Mammary epithelial cell (primary cell): ENCODE measurements at regions of chr3 and their contacts with region 1.

Region 1: DNA sequence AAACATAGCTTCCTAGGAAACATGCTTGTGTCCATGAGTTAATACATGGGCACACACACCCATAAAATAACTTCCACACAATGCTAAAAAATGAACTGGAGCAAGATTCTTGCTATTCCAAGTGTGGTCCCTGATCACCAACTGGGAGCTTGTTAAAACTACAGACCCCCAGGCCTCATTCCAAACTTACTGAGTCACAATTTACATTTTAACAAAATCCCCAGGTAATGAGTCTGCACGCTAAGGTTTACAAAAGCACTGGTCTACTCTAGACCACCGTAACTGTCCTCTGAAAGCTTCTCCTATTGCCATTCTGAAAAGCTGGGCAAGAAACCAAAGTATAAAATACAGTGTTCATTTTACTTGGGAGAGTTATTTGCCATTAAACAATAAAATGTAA is 45.4 kb downstream of the IGF2BP2 start:
- DNase-seq: no peak
- H3K4me3 ChIP-seq: no peak overlapping the region
- H3K27ac ChIP-seq: no peak overlapping the region
- H3K4me1 ChIP-seq: peaks cover 33% of the 10 kb centered on the region
- H3K27me3 ChIP-seq: no peaks in the 10 kb centered on the region
- CTCF ChIP-seq: no peak

Region 2: GRCh38 chr3:185582866-185583265 is 196.6 kb before region 1 on chr3:
- CTCF ChIA-PET with region 1: no interaction called
- dilution Hi-C with region 1: no loop called
- in situ Hi-C with region 1: no loop called
- intact Hi-C with region 1: no loop called
- DNase-seq: no peak
- H3K4me3 ChIP-seq: no peak overlapping the region
- H3K27ac ChIP-seq: no peak overlapping the region
- H3K4me1 ChIP-seq: peaks cover 11% of the 10 kb centered on the region
- H3K27me3 ChIP-seq: no peaks in the 10 kb centered on the region
- CTCF ChIP-seq: no peak

Region 3: DNA sequence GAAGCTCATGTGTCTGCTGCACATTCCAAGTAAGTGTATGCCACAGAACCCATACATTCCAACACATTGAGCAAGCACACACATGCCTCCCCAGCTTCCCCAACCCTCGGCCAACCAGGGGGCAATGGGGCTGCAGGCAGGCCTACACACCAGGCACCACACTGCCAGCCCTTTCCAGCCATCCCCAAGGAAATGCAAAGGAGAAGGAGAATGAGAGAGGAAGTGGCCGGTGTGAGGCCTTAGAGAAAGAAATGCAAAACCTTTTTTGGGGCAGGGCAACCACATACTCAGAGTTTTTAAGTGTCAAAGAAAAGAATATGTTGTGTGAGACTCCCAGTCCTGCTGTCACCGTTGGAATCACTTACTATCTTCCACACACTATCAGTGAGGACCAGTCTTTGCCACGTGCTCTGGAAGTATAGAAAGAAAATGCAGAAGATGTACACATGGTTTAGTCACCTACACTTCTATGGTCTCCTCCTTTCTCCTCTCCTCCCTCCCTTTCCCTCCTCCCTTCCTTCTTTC is 34.3 kb after region 1 on chr3:
- CTCF ChIA-PET with region 1: no interaction called
- dilution Hi-C with region 1: loop called (anchors 5 kb)
- in situ Hi-C with region 1: no loop called
- intact Hi-C with region 1: no loop called
- DNase-seq: peak; percentile 58
- H3K4me3 ChIP-seq: no peak overlapping the region
- H3K27ac ChIP-seq: peak overlapping the region; percentile 47
- H3K4me1 ChIP-seq: peaks cover 38% of the 10 kb centered on the region
- H3K27me3 ChIP-seq: no peaks in the 10 kb centered on the region
- CTCF ChIP-seq: no peak

Region 4: GRCh38 chr3:185858502-185859225 is 79.2 kb after region 1 on chr3:
- CTCF ChIA-PET with region 1: no interaction called
- dilution Hi-C with region 1: loop called (anchors 5 kb)
- in situ Hi-C with region 1: no loop called
- intact Hi-C with region 1: no loop called
- DNase-seq: no peak
- H3K4me3 ChIP-seq: no peak overlapping the region
- H3K27ac ChIP-seq: no peak overlapping the region
- H3K4me1 ChIP-seq: no peaks in the 10 kb centered on the region
- H3K27me3 ChIP-seq: no peaks in the 10 kb centered on the region
- CTCF ChIP-seq: no peak

Region 5: DNA sequence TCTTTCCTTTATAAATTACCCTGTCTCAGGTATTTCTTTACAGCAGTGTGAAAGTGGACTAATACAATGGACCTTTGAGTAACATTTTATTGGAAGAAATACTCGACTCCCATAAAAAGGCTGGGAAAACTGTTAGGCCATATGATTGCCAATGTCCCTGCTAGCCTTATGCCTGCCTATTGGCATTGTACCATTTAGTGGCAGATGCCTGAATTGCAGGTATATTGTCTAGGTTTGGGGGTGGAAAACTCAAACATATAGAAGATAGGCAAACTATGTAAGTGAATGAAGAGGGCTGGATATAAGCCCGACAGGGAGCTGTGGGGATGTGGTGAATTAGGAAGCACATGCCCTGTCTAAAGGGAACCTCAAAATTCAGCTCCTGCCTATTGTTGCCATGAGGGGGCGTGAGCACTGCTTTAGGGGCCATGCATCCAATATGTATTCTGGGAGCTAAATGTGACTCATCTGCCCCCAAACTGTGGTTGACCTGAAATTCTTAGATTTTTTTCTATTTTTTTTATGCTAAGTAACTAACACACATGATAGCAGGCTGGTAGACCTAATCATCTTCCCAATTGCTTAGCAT is 223.5 kb after region 1 on chr3:
- CTCF ChIA-PET with region 1: no interaction called
- dilution Hi-C with region 1: no loop called
- in situ Hi-C with region 1: no loop called
- intact Hi-C with region 1: no loop called
- DNase-seq: peak; percentile 41
- H3K4me3 ChIP-seq: no peak overlapping the region
- H3K27ac ChIP-seq: no peak overlapping the region
- H3K4me1 ChIP-seq: no peaks in the 10 kb centered on the region
- H3K27me3 ChIP-seq: no peaks in the 10 kb centered on the region
- CTCF ChIP-seq: peak in 1 of 2 donors; percentile 51